ENCODE measurements at regions of chr3 and their contacts with region 1.

Region 1: DNA sequence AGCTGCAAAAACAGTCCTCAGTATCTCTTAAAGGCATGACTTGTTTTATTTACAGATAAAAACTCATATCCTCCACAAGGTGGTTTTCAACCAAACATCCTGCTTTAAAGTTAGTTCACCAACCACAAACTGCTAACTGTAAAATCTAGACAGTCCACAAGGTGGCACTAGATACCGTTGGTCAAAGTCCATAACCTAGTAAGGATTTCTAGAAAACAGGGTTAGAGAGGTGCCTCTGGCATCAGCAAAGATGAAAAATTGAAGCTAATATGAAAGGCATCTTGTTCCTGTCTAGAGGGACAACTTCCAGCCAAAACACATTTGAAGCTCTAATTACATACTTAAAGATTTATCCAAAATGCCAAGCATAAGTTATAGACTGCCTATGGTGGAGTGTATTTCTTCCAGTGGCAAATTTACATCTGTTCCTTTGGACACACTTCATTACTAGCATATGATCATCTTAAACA is 56.0 kb downstream of the ZMAT3 start:
- DNase-seq: no peak
- ATAC-seq: peak; percentile 74
- H3K4me3 Mint-ChIP-seq: peak overlapping the region; percentile 15
- H3K27ac Mint-ChIP-seq: peak overlapping the region; percentile 57
- H3K4me1 Mint-ChIP-seq: peaks cover 59% of the 10 kb centered on the region
- H3K27me3 Mint-ChIP-seq: no peaks in the 10 kb centered on the region
- CTCF ChIP-seq: peak; percentile 88

Region 2: GRCh38 chr3:178823150-178823549 is 192.4 kb before region 1 on chr3:
- CTCF ChIA-PET with region 1: no interaction called
- POLR2A ChIA-PET with region 1: no interaction called
- intact Hi-C with region 1: no loop called
- DNase-seq: no peak
- ATAC-seq: no peak
- H3K4me3 Mint-ChIP-seq: no peak overlapping the region
- H3K27ac Mint-ChIP-seq: no peak overlapping the region
- H3K4me1 Mint-ChIP-seq: no peaks in the 10 kb centered on the region
- H3K27me3 Mint-ChIP-seq: no peaks in the 10 kb centered on the region
- CTCF ChIP-seq: no peak

Region 3: GRCh38 chr3:178947738-178948137 is 67.8 kb before region 1 on chr3:
- CTCF ChIA-PET with region 1: no interaction called
- POLR2A ChIA-PET with region 1: no interaction called
- intact Hi-C with region 1: no loop called
- DNase-seq: no peak
- ATAC-seq: no peak
- H3K4me3 Mint-ChIP-seq: no peak overlapping the region
- H3K27ac Mint-ChIP-seq: no peak overlapping the region
- H3K4me1 Mint-ChIP-seq: no peaks in the 10 kb centered on the region
- H3K27me3 Mint-ChIP-seq: peaks cover 1% of the 10 kb centered on the region
- CTCF ChIP-seq: no peak

Region 4: DNA sequence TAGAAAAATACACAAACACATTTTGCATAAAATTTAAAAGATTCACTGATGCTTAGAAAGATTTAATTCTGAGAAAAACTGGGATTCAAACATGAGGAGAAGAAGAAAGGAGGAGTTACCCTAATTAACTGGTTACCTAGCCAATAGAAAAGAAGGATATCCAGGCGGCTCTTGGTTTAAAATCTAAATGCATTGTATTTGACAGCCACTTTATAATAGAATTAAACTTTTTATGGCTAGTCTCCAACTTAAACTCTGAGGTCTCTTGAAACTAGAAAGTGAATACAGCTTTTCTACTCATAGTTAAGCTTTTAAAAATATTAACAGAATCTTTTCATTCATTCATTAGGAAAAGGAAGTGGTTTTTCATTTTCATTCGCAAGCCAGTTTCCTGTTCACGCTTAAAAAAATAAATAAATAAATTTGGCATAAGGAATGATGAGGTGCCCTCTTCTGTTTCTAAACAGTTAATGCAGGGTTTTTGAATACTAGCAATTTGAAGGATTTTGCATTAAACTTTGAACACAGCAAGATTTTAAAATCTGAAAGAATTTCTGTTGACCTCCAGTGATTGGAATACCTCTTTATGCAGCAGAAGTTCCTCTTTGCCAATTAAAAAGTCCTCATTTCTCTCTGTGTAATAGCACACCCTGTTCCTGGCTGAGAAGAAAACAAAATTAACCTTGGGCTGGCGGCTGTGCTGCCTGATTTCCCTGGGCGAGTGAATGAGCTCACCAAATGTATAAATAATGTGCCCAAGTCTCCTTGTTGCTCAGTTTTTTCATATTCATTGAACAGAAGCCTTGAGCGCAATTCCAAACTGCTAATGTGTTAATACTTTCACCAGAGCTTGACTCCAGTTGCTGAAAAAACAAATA is 49.0 kb before region 1 on chr3:
- CTCF ChIA-PET with region 1: interaction called, 3 read pairs
- POLR2A ChIA-PET with region 1: no interaction called
- intact Hi-C with region 1: loop called (anchors 2 kb)
- DNase-seq: no peak
- ATAC-seq: no peak
- H3K4me3 Mint-ChIP-seq: peak overlapping the region; percentile 76
- H3K27ac Mint-ChIP-seq: peak overlapping the region; percentile 81
- H3K4me1 Mint-ChIP-seq: peaks cover 46% of the 10 kb centered on the region
- H3K27me3 Mint-ChIP-seq: no peaks in the 10 kb centered on the region
- CTCF ChIP-seq: no peak

Region 5: DNA sequence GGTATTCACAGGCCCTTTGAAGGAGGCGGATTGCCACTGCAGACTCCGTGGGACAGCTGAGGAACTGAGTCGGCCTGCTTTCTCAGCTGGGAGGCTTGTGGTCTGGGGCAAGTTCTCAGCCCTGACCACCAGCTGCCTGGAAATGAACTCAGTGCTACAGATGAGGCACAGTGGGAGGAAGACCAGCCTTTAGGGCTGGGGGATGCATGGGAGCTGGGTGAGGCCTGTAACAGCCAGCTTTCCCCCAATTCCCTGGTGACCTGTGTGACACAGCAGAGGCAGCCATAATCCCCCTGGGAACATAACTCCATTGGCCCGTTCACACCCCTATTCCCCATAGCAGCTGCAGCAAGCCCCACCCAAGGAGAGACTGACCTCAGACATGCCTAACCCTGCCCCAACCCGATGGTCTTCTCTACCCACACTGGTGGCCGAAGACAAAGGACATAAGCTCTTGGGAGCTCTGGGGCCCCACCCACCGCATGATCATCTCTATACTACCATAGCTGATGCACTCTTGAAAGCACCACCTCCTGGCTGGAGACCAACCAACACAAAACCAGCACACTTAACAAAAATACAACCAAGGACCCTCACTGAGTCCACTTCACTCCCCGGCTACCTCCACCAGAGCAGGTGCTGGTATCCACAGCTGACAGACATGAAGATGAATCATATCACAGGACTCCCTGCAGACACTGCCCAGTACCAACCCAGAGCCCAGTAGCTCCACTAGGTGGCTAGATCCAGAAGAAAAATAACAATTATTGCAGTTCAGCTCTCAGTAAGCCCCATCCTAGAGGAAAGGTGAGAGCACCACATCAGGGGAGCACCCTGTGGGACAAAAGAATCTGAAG is 31.1 kb after region 1 on chr3:
- CTCF ChIA-PET with region 1: interaction called, 17 read pairs
- POLR2A ChIA-PET with region 1: interaction called, 11 read pairs
- intact Hi-C with region 1: loop called (anchors 1 kb)
- DNase-seq: peak; percentile 54
- ATAC-seq: peak; percentile 88
- H3K4me3 Mint-ChIP-seq: peak overlapping the region; percentile 75
- H3K27ac Mint-ChIP-seq: peak overlapping the region; percentile 87
- H3K4me1 Mint-ChIP-seq: peaks cover 63% of the 10 kb centered on the region
- H3K27me3 Mint-ChIP-seq: no peaks in the 10 kb centered on the region
- CTCF ChIP-seq: no peak

Region 6: GRCh38 chr3:179108086-179108485 is 92.5 kb after region 1 on chr3:
- CTCF ChIA-PET with region 1: interaction called, 9 read pairs
- POLR2A ChIA-PET with region 1: no interaction called
- intact Hi-C with region 1: loop called (anchors 1 kb)
- DNase-seq: no peak
- ATAC-seq: no peak
- H3K4me3 Mint-ChIP-seq: no peak overlapping the region
- H3K27ac Mint-ChIP-seq: no peak overlapping the region
- H3K4me1 Mint-ChIP-seq: no peaks in the 10 kb centered on the region
- H3K27me3 Mint-ChIP-seq: peaks cover 13% of the 10 kb centered on the region
- CTCF ChIP-seq: no peak

Region 7: DNA sequence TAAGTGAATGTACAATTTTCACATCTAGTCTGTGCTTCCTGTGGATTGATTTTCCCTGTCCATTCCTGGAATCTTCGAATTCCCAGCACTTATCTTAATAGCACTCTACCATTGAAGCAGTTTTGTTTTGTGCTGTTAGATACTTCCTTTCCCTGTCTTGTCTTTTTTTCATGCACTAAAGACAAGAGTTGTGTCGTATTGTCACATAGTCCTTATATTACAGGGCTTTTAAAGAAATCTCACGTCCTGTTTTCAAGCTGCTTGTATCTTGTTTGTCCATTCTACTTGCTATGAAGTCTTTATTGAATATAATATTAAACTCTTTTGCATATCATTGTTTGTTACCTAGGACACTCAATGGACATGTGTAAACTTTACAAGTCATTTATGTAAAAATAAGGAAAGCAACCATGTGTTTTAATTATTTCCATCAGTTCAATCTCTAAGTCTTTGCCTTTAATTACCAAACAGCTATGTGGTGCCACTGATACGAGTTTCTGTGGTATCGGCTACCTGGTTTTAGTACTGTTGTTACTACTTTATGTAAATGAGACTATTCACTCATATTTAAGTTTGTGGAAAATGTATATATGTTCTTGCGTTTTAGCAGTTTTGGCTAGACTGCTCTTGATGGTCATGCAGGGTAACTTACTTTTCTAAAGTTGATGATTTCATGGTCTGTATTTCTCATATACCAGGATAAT is 142.9 kb after region 1 on chr3:
- CTCF ChIA-PET with region 1: no interaction called
- POLR2A ChIA-PET with region 1: no interaction called
- intact Hi-C with region 1: no loop called
- DNase-seq: no peak
- ATAC-seq: no peak
- H3K4me3 Mint-ChIP-seq: no peak overlapping the region
- H3K27ac Mint-ChIP-seq: no peak overlapping the region
- H3K4me1 Mint-ChIP-seq: peaks cover 65% of the 10 kb centered on the region
- H3K27me3 Mint-ChIP-seq: no peaks in the 10 kb centered on the region
- CTCF ChIP-seq: no peak

Region 8: GRCh38 chr3:179227349-179227748 is 211.8 kb after region 1 on chr3:
- CTCF ChIA-PET with region 1: interaction called, 4 read pairs
- POLR2A ChIA-PET with region 1: no interaction called
- intact Hi-C with region 1: loop called (anchors 5 kb)
- DNase-seq: no peak
- ATAC-seq: no peak
- H3K4me3 Mint-ChIP-seq: no peak overlapping the region
- H3K27ac Mint-ChIP-seq: peak overlapping the region; percentile 44
- H3K4me1 Mint-ChIP-seq: no peaks in the 10 kb centered on the region
- H3K27me3 Mint-ChIP-seq: no peaks in the 10 kb centered on the region
- CTCF ChIP-seq: no peak

Region 9: GRCh38 chr3:179322286-179323196 is 307.0 kb after region 1 on chr3 and contains the start of gene ZNF639:
- CTCF ChIA-PET with region 1: interaction called, 40 read pairs
- POLR2A ChIA-PET with region 1: interaction called, 12 read pairs
- intact Hi-C with region 1: loop called (anchors 1 kb)
- DNase-seq: peak; percentile 89
- ATAC-seq: peak; percentile 88
- H3K4me3 Mint-ChIP-seq: peak within 1 kb of the TSS; percentile 87
- H3K27ac Mint-ChIP-seq: peak within 1 kb of the TSS; percentile 89
- H3K4me1 Mint-ChIP-seq: peaks cover 36% of the 10 kb centered on the region
- H3K27me3 Mint-ChIP-seq: no peaks in the 10 kb centered on the region
- CTCF ChIP-seq: peak; percentile 57
- total RNA-seq, gene ZNF639: 37.1 and 41.4 TPM in 2 replicates

Region 10: GRCh38 chr3:179653096-179653797 is 637.7 kb after region 1 on chr3:
- CTCF ChIA-PET with region 1: no interaction called
- POLR2A ChIA-PET with region 1: no interaction called
- intact Hi-C with region 1: loop called (anchors 2 kb)
- DNase-seq: peak; percentile 66
- ATAC-seq: peak; percentile 38
- H3K4me3 Mint-ChIP-seq: peak overlapping the region; percentile 91
- H3K27ac Mint-ChIP-seq: peak overlapping the region; percentile 87
- H3K4me1 Mint-ChIP-seq: peaks cover 25% of the 10 kb centered on the region
- H3K27me3 Mint-ChIP-seq: no peaks in the 10 kb centered on the region
- CTCF ChIP-seq: no peak

Measured in activated B cell treated with CpG ODN at 0.5 μM for 24 hours (primary cell).